Endothelial cell of umbilical vein (primary cell): ENCODE measurements at regions of chr1 and their contacts with region 1.

Region 1: GRCh38 chr1:235504496-235505222 is 407 bp upstream of the B3GALNT2 start:
- DNase-seq: peak; percentile 100
- H3K4me3 ChIP-seq: peak overlapping the region; percentile 14 to 80 (median 41)
- H3K27ac ChIP-seq: peak overlapping the region; percentile 71
- H3K4me1 ChIP-seq: peaks cover 9% of the 10 kb centered on the region
- H3K27me3 ChIP-seq: no peaks in the 10 kb centered on the region
- CTCF ChIP-seq: peak; percentile 87 to 92
- POLR2A ChIP-seq: peak; percentile 53

Region 2: GRCh38 chr1:234478481-234479309 is 1026.0 kb before region 1 on chr1 and contains the start of gene TARBP1:
- CTCF ChIA-PET with region 1: no interaction called
- POLR2A ChIA-PET with region 1: no interaction called
- dilution Hi-C with region 1: no loop called
- intact Hi-C with region 1: loop called (anchors 10 kb)
- DNase-seq: peak; percentile 75
- H3K4me3 ChIP-seq: peak within 1 kb of the TSS; percentile 46 to 78 (median 48)
- H3K27ac ChIP-seq: peak within 1 kb of the TSS; percentile 35
- H3K4me1 ChIP-seq: peaks cover 6% of the 10 kb centered on the region
- H3K27me3 ChIP-seq: peaks cover 18 to 21% of the 10 kb centered on the region in 2 experiments
- CTCF ChIP-seq: peak in 1 of 2 donors; percentile 27
- POLR2A ChIP-seq: peak; percentile 71
- total RNA-seq, gene TARBP1: 21.0 and 23.4 TPM in 2 replicates

Region 3: GRCh38 chr1:235253219-235253962 is 251.3 kb before region 1 on chr1:
- CTCF ChIA-PET with region 1: no interaction called
- POLR2A ChIA-PET with region 1: no interaction called
- dilution Hi-C with region 1: no loop called
- intact Hi-C with region 1: loop called (anchors 5 kb)
- DNase-seq: peak; percentile 71
- H3K4me3 ChIP-seq: no peak overlapping the region
- H3K27ac ChIP-seq: no peak overlapping the region
- H3K4me1 ChIP-seq: no peaks in the 10 kb centered on the region
- H3K27me3 ChIP-seq: no peaks in the 10 kb centered on the region
- CTCF ChIP-seq: peak; percentile 74 to 81
- POLR2A ChIP-seq: no peak

Region 4: DNA sequence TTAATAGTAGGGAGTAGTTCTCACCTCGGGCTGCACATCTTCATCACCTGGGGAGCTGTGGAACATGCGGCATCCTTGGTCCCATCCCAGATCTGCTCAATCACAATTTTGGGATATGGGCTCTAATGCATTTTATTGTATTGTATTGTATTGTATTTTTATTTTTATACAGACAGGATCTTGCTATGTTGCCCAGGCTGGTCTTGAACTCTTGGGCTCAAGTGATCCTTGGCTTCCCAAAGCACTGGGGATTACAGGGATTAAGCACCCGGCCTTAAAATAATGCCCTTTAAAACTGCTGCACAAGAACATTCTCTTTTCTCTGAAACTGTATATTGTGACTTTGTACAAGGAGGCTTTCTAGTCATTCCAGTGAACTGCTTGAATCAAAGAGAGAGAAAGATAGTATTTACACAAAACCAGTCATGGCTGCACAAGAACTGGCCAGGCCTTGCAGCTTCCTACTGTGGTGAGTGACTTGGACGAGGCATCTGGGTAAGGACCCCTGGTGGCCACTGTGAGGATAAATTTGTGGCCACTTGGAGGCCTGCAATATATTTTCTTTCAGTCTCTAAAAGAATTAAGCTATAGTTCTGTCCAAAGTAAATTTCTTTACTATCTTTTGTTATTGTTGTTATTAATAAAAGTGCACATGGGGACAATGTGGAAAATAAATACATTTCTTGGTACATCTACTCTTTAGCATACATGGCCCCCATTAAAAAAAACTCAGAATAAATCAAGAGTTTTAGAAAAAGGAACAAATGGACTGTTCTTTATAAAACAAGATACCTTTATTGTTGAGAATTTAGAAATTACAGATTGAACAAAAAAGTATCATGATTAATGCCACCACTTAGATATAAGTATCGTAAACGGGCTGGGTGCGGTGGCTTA is 89.4 kb before region 1 on chr1:
- CTCF ChIA-PET with region 1: interaction called, 17 read pairs
- POLR2A ChIA-PET with region 1: no interaction called
- dilution Hi-C with region 1: no loop called
- intact Hi-C with region 1: no loop called
- DNase-seq: peak; percentile 70
- H3K4me3 ChIP-seq: no peak overlapping the region
- H3K27ac ChIP-seq: no peak overlapping the region
- H3K4me1 ChIP-seq: no peaks in the 10 kb centered on the region
- H3K27me3 ChIP-seq: no peaks in the 10 kb centered on the region
- CTCF ChIP-seq: peak; percentile 71 to 80
- POLR2A ChIP-seq: no peak

Region 5: GRCh38 chr1:235783148-235783776 is 278.6 kb after region 1 on chr1:
- CTCF ChIA-PET with region 1: interaction called, 10 read pairs
- POLR2A ChIA-PET with region 1: no interaction called
- dilution Hi-C with region 1: no loop called
- intact Hi-C with region 1: no loop called
- DNase-seq: peak; percentile 52
- H3K4me3 ChIP-seq: no peak overlapping the region
- H3K27ac ChIP-seq: no peak overlapping the region
- H3K4me1 ChIP-seq: no peaks in the 10 kb centered on the region
- H3K27me3 ChIP-seq: no peaks in the 10 kb centered on the region
- CTCF ChIP-seq: peak in 1 of 2 donors; percentile 13
- POLR2A ChIP-seq: no peak

Region 6: DNA sequence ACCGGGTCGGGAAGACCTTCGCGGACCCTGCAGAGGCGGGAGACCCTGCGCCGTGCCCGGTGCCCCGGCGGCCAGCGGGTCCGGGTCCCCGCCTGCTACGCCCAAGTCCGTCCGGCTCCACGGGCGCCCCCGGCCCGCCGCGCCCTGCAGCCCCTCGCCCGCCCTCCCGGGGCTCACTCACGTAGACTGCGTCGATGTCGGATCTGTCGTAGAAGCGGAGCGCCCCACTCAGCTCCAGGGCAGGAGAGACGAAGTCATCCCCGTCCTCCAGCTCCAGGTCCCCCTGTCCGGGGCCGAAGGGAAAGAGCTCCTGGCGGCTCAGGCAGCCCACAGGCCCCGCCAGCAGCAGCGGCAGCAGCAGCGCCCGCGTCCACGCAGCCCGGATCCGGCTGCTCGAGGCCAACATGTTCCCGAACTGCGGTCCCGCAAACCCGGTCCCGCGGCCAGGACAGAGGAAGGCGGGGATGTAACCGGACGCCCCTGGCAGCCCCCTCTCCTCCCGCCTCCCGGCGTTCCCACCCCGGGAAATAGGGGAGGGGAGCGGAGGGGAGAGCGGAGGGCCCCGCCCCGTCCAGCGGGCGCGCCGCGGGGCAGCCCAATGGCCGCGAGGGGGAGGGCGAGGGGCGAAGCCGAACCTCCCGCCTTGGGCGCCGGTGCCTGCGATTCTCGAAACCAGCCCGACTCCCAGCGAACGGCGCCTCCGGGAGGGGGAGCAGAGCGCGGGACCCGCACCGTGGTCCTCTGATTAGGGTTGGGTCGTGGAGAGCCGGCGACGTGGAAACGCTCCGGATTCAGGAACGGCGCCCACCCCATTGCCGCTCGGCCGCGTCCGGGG is 560.2 kb after region 1 on chr1 and contains the start of gene NID1:
- CTCF ChIA-PET with region 1: no interaction called
- POLR2A ChIA-PET with region 1: no interaction called
- dilution Hi-C with region 1: no loop called
- intact Hi-C with region 1: loop called (anchors 10 kb)
- DNase-seq: peak; percentile 75
- H3K4me3 ChIP-seq: peak within 1 kb of the TSS; percentile 75 to 89 (median 89)
- H3K27ac ChIP-seq: peak within 1 kb of the TSS; percentile 55
- H3K4me1 ChIP-seq: peaks cover 8% of the 10 kb centered on the region
- H3K27me3 ChIP-seq: no peaks in the 10 kb centered on the region
- CTCF ChIP-seq: peak in 1 of 2 donors; percentile 52
- POLR2A ChIP-seq: peak; percentile 27
- total RNA-seq, gene NID1: 87.0 and 102 TPM in 2 replicates